Aorta (tissue), 5 donors: ENCODE measurements at regions of chr21 and their contacts with region 1.

Region 1: GRCh38 chr21:34888569-34889319 is 160.4 kb downstream of the RUNX1 start:
- DNase-seq: peak; percentile 97
- ATAC-seq: peak; percentile 91
- H3K4me3 ChIP-seq: peak overlapping the region; percentile 63 to 68
- H3K27ac ChIP-seq: peak overlapping the region in 1 of 2 donors; percentile 48
- H3K4me1 ChIP-seq: no peaks in the 10 kb centered on the region
- H3K27me3 ChIP-seq: no peaks in the 10 kb centered on the region

Region 2: DNA sequence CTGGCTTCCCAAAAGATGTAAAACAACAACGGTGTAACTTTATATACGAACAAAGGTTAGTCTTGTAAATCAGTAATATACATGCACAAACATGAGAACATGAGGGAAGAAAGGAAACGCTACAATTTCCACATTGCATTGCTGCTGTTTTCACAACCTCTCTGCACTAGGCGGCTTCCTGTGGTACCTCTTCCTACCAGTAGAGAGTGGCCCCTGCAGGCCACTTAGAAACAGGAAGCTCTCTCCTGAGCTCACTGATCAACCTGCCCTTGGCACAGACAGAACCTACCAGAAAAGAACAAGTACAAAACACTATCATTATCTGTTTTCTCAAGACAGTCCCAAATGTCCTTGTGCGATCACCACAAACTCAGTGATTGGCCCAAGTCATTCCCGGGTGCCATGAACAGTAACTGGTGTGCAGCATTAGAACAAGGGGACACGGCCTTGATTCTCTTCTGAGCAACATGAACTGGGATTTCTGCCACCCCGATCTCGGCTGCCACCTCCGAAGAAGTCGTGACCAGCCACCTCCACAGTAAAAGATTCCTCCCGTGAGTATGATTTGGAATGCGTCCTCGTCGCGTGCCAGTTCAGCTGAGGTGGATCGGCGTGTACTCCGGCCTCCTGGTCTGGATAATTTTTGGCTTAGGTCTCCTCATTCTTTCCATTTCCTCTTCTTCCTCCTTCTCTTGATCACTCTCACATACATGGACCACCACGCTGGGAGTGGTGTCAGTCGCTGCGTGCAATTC is 371.1 kb before region 1 on chr21:
- intact Hi-C with region 1: no loop called
- DNase-seq: no peak
- ATAC-seq: no peak
- H3K4me3 ChIP-seq: no peak overlapping the region
- H3K27ac ChIP-seq: no peak overlapping the region
- H3K4me1 ChIP-seq: no peaks in the 10 kb centered on the region
- H3K27me3 ChIP-seq: no peaks in the 10 kb centered on the region

Region 3: GRCh38 chr21:34745557-34746255 is 143.0 kb before region 1 on chr21:
- intact Hi-C with region 1: loop called in 1 of 2 experiments (anchors 5 kb)
- DNase-seq: peak; percentile 82 to 84
- ATAC-seq: peak; percentile 89
- H3K4me3 ChIP-seq: no peak overlapping the region
- H3K27ac ChIP-seq: no peak overlapping the region
- H3K4me1 ChIP-seq: no peaks in the 10 kb centered on the region
- H3K27me3 ChIP-seq: no peaks in the 10 kb centered on the region

Region 4: GRCh38 chr21:35051287-35051818 is 162.6 kb after region 1 on chr21:
- intact Hi-C with region 1: loop called (anchors 5 to 10 kb)
- DNase-seq: peak; percentile 88 to 93
- ATAC-seq: peak; percentile 71
- H3K4me3 ChIP-seq: no peak overlapping the region
- H3K27ac ChIP-seq: peak overlapping the region in 1 of 2 donors; percentile 93
- H3K4me1 ChIP-seq: peaks cover 0 to 7% of the 10 kb centered on the region in 2 donors
- H3K27me3 ChIP-seq: no peaks in the 10 kb centered on the region

Region 5: DNA sequence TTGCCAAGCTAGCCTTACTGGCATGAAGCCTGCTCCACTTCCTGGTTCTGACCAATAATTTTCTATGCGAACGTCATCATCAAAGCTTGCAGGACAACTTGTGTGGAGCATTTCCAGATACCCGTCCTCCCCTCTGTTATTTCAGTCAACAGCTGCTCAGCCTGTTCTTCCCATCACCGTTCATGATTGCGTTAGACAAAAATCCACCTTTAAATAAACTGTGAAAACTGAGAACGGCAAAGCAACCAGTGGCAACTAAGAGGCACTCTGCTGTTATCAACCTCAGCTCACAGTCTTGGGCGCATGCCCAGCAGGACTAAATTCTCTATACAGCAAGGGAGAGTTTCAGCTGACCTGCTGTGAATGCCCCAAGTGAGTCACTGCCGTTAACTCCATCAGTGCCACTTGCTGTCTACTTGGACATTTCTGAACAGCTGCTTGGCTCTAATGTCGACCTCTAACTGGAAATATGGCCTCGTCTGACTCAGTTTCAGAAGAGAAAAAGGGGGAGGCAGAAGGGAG is 367.8 kb after region 1 on chr21:
- intact Hi-C with region 1: loop called in 1 of 2 experiments (anchors 10 kb)
- DNase-seq: peak; percentile 91 to 92
- ATAC-seq: peak; percentile 82
- H3K4me3 ChIP-seq: no peak overlapping the region
- H3K27ac ChIP-seq: peak overlapping the region in 1 of 2 donors; percentile 17
- H3K4me1 ChIP-seq: no peaks in the 10 kb centered on the region
- H3K27me3 ChIP-seq: no peaks in the 10 kb centered on the region

Region 6: DNA sequence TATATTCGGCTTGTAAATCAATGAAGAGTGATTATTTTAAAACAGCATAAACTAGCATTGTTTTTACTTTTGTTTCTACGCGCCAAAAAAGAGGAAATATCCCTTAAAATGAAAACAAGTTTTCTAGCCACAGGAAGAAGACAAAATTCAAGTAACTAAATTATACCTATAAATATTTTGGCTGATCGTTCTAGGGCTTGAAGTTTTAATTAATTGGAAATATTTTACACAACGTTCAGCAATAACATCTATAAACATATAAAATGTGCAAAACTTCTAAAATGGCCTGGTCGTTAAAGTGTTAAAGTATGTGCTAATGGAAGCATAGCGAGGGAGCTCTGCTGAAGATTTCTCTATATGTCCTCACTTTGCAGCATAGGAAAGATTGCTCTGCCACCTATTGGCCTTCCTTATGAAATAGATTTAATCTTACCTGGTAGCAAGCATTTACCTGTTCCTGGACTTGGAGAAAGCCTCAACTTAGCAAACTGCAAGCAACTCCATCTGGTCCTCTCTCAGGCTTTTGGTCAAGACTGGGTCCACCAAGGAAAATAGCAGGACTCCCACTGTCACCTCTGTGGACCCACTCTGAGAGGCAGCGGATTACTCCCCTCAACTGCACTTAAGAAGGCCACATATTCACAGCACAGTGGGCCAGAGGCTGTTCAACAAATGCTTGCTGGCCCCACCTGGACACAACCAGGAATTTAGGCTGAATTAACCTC is 511.7 kb after region 1 on chr21:
- intact Hi-C with region 1: loop called in 1 of 2 experiments (anchors 2 kb)
- DNase-seq: no peak
- ATAC-seq: no peak
- H3K4me3 ChIP-seq: no peak overlapping the region
- H3K27ac ChIP-seq: no peak overlapping the region
- H3K4me1 ChIP-seq: no peaks in the 10 kb centered on the region
- H3K27me3 ChIP-seq: no peaks in the 10 kb centered on the region

Region 7: DNA sequence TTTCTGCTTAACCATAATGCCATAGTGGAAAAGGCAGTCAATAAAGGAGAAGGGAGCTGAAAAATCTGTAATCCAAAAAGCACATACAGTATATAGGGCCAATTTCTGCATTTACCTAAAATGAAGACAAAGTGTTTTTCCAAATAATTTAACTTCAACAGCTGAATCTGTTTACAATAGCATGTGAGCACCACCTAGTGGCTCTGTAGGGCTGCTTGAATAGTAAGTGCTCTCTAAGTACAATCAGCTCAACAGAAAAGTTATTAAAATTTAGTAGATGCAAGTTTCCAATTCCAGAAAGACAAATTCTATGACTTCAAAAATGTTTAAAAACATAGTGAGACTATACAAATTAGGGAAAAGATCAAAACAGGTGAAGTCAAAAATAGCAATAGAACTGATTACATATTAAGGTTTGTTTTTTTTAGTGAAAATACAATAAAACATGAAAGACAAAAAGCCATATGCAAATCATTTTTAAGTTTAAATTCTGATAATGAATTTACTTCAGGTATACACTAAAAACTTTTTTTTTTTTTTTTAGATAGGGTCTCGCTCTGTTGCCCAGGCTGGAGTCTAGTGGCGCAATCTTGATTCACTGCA is 951.6 kb after region 1 on chr21:
- intact Hi-C with region 1: loop called in 1 of 2 experiments (anchors 5 kb)
- DNase-seq: peak in 1 of 2 donors; percentile 67
- ATAC-seq: no peak
- H3K4me3 ChIP-seq: no peak overlapping the region
- H3K27ac ChIP-seq: no peak overlapping the region
- H3K4me1 ChIP-seq: no peaks in the 10 kb centered on the region
- H3K27me3 ChIP-seq: no peaks in the 10 kb centered on the region

Region 8: DNA sequence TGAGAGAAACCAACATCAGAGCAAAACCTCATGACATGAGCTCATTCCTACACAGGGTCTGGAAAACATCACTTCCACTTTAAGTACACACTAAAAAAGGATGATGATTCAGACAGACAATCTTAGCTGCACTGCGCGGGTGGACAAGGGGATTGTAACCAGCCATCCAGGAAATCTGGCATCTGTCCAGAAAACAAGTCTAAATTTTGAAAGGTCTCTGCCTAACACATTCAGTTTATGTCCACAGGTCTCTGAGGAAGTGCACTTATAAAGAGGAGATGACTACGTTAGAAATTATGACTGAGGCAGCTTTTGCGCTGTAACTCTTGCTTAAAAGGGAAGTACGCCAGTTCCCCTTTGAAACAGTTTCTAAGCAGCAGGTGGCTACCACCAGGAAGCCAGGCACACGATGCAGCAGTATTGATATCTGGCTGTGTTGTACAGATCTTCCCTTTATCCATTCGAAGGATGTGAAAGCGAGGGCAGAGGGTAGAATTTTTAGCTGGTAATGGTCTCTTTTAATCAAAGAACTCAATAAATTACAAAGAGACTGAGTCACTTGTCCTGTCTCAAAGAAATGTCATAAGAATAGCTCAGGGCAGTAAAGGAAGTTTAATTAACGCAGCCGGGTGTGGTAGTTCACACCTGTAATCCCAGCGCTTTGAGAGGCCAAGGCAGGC is 1043.6 kb after region 1 on chr21:
- intact Hi-C with region 1: loop called (anchors 10 kb)
- DNase-seq: peak in 1 of 2 donors; percentile 72
- ATAC-seq: peak; percentile 66
- H3K4me3 ChIP-seq: no peak overlapping the region
- H3K27ac ChIP-seq: no peak overlapping the region
- H3K4me1 ChIP-seq: peaks cover 0 to 3% of the 10 kb centered on the region in 2 donors
- H3K27me3 ChIP-seq: no peaks in the 10 kb centered on the region